Activated naive CD4-positive, alpha-beta T cell treated with anti-CD3 and anti-CD28 coated beads for 36 hours (primary cell): ENCODE measurements at regions of chr1 and their contacts with region 1.

Region 1: GRCh38 chr1:150629115-150629928 is at the start of gene ENSA:
- DNase-seq: peak; percentile 98
- H3K4me3 Mint-ChIP-seq: no peak within 1 kb of the TSS
- H3K27ac Mint-ChIP-seq: peak within 1 kb of the TSS; percentile 54
- H3K4me1 Mint-ChIP-seq: peaks cover 42% of the 10 kb centered on the region
- H3K27me3 Mint-ChIP-seq: no peaks in the 10 kb centered on the region
- total RNA-seq, gene ENSA: 187 to 193 TPM

Region 2: DNA sequence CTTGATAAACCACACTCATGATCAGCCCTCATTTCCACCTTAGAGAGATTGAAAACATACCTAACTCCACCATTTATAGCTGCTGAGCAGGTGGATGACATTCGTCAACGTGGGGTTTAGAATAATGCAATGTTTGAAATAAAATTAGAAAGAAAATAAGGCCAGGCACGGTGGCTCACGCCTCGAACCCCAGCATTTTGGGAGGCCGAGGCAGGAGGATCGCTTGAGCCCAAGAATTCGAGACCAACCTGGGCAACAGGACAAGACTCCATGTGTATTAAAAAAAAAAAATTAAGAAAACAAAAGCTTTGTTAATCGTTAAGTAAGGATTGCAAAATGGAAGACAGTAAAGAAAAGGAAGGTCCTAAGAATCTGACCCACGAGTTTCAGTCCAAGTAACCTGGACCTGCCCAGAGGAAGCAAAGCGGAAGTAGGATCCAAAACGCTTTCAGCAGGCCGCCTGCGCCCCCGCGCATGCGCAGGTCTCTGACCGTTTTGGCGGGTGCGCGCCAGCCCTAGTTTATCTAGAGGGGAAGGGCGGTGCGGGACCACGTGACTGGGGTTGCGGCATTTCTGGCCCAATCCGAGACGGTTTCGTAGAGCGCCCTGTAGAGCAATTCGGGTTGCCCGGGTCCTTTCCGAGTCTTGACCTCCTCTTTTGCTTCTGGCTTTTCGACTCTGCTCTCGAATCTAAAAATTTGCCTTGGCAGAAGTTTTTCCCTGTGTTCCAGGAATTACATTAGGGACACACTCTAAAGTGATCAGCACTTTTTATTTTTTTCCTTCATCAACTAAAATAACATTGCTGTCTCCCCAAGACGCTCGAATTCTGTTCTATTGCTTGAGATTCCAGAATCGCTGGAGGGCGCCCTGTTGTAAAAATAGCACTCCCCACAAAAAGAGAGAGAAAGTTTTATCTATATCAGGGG is 415.9 kb before region 1 on chr1:
- CTCF ChIA-PET with region 1: no interaction called
- intact Hi-C with region 1: loop called (anchors 1 kb)
- DNase-seq: peak; percentile 96
- H3K4me3 Mint-ChIP-seq: peak overlapping the region; percentile 81
- H3K27ac Mint-ChIP-seq: peak overlapping the region; percentile 92
- H3K4me1 Mint-ChIP-seq: peaks cover 15% of the 10 kb centered on the region
- H3K27me3 Mint-ChIP-seq: no peaks in the 10 kb centered on the region

Region 3: DNA sequence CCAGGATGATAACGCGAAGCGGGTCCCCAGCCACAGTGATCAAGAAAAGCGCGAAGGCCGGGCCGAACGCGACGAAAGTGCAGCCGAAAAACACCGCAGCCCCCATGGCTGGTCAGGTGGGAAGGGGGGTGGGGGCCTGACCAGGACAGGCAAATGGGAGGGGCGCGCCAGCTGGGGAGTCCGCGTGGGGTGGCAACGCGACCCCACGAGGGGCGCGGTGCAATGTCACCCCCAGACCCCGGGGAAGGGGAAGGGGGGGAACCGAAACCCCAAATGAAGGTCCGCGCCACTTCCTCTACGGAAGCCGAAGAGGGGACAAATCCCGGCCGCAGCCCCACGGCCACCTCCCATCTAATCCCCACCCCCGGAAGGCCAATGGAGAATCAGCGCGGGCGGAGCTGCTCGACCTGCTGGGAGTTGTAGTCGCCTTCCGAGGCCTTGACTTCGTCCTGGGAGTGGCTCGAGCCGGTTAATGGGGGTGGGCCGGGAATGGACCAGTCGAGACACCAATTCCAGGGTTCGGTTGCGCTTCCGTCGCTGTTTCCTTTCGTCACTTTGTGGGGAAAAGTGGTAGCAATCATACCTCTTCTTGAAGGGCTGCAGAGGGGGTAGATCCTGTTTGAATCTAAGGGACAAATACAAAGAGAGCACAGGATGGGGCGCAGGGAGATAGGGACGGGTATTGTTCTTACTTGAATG is 360.5 kb before region 1 on chr1 and contains the start of gene APH1A:
- CTCF ChIA-PET with region 1: no interaction called
- intact Hi-C with region 1: loop called (anchors 1 kb)
- DNase-seq: peak; percentile 98
- H3K4me3 Mint-ChIP-seq: peak within 1 kb of the TSS; percentile 89
- H3K27ac Mint-ChIP-seq: peak within 1 kb of the TSS; percentile 96
- H3K4me1 Mint-ChIP-seq: peaks cover 23% of the 10 kb centered on the region
- H3K27me3 Mint-ChIP-seq: no peaks in the 10 kb centered on the region
- total RNA-seq, gene APH1A: 71.2 to 75.7 TPM

Region 4: GRCh38 chr1:150578965-150579798 is 50.1 kb before region 1 on chr1 and contains the start of gene MCL1:
- CTCF ChIA-PET with region 1: no interaction called
- intact Hi-C with region 1: loop called (anchors 1 kb)
- DNase-seq: peak; percentile 95
- H3K4me3 Mint-ChIP-seq: peak within 1 kb of the TSS; percentile 90
- H3K27ac Mint-ChIP-seq: peak within 1 kb of the TSS; percentile 99
- H3K4me1 Mint-ChIP-seq: peaks cover 19% of the 10 kb centered on the region
- H3K27me3 Mint-ChIP-seq: no peaks in the 10 kb centered on the region
- total RNA-seq, gene MCL1: 228 to 235 TPM

Region 5: GRCh38 chr1:150696590-150697524 is 67.5 kb after region 1 on chr1 and contains the start of gene GOLPH3L:
- CTCF ChIA-PET with region 1: interaction called, 3 read pairs
- intact Hi-C with region 1: loop called (anchors 1 kb)
- DNase-seq: peak; percentile 97
- H3K4me3 Mint-ChIP-seq: peak within 1 kb of the TSS; percentile 92
- H3K27ac Mint-ChIP-seq: peak within 1 kb of the TSS; percentile 82
- H3K4me1 Mint-ChIP-seq: peaks cover 23% of the 10 kb centered on the region
- H3K27me3 Mint-ChIP-seq: peaks cover 2% of the 10 kb centered on the region
- total RNA-seq, gene GOLPH3L: 17.1 to 18.2 TPM

Region 6: GRCh38 chr1:151001602-151002001 is 372.3 kb after region 1 on chr1:
- CTCF ChIA-PET with region 1: no interaction called
- intact Hi-C with region 1: loop called (anchors 2 kb)
- DNase-seq: no peak
- H3K4me3 Mint-ChIP-seq: no peak overlapping the region
- H3K27ac Mint-ChIP-seq: peak overlapping the region; percentile 56
- H3K4me1 Mint-ChIP-seq: peaks cover 53% of the 10 kb centered on the region
- H3K27me3 Mint-ChIP-seq: no peaks in the 10 kb centered on the region